Prostate gland (tissue), 2 donors: ENCODE measurements at regions of chr10 and their contacts with region 1.

Region 1: DNA sequence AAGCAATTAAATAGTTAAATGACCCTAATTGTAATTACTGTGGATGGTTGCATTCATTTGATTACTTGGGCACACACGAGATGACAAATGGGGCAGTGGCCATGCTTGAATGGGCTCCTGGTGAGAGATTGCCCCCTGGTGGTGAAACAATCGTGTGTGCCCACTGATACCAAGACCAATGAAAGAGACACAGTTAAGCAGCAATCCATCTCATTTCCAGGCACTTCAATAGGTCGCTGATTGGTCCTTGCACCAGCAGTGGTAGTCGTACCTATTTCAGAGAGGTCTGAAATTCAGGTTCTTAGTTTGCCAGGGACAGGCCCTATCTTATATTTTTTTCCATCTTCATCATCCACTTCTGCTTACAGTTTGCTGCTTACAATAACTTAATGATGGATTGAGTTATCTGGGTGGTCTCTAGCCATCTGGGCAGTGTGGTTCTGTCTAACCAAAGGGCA is 8.3 kb downstream of the PCBD1 start:
- DNase-seq: peak; percentile 87
- H3K4me3 ChIP-seq: no peak overlapping the region
- H3K27ac ChIP-seq: no peak overlapping the region
- H3K4me1 ChIP-seq: peaks cover 4% of the 10 kb centered on the region
- H3K27me3 ChIP-seq: no peaks in the 10 kb centered on the region
- CTCF ChIP-seq: peak; percentile 93 to 99 (median 96)
- POLR2A ChIP-seq: no peak

Region 2: DNA sequence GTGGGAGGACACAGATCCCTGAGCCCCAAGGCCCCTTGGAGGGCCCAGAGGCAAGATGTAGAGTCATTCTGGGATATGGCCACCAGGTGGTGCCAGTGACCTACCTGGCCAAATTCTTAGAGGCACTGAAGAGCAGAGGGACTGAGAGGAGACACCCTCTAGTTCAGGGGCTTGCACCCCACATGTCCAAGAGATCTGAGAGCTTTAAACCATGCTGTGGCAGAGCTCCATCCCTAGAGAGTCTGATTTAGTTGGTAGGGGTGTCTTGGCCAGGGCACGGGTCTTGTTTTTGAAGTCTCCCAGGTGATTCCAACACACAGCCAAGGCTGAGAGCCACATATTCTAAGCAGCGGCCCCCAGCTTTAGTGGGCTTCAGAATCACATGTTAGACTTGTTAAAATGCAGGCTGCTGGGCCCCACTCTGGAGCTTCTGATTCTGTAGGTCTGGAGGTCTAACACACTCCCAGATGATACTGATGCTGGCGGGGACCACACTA is 330.1 kb before region 1 on chr10:
- intact Hi-C with region 1: loop called (anchors 5 kb)
- DNase-seq: peak; percentile 36
- H3K4me3 ChIP-seq: no peak overlapping the region
- H3K27ac ChIP-seq: no peak overlapping the region
- H3K4me1 ChIP-seq: no peaks in the 10 kb centered on the region
- H3K27me3 ChIP-seq: no peaks in the 10 kb centered on the region
- CTCF ChIP-seq: peak; percentile 66 to 87 (median 84)
- POLR2A ChIP-seq: no peak

Region 3: GRCh38 chr10:70815504-70816219 is 64.4 kb before region 1 on chr10 and contains the start of gene SGPL1:
- intact Hi-C with region 1: loop called (anchors 1 kb)
- DNase-seq: peak; percentile 86
- H3K4me3 ChIP-seq: peak within 1 kb of the TSS; percentile 84 to 85
- H3K27ac ChIP-seq: peak within 1 kb of the TSS; percentile 96 to 98
- H3K4me1 ChIP-seq: no peaks in the 10 kb centered on the region
- H3K27me3 ChIP-seq: no peaks in the 10 kb centered on the region
- CTCF ChIP-seq: peak; percentile 97 to 100 (median 98)
- POLR2A ChIP-seq: peak; percentile 73
- total RNA-seq, gene SGPL1: 52.6 to 64.4 TPM